ENCODE measurements at regions of chr13 and their contacts with region 1.

Region 1: GRCh38 chr13:76886292-76887075 is at the start of gene KCTD12:
- DNase-seq: peak; percentile 64
- H3K4me3 ChIP-seq: peak within 1 kb of the TSS; percentile 62
- H3K27ac ChIP-seq: no peak within 1 kb of the TSS
- H3K4me1 ChIP-seq: no peaks in the 10 kb centered on the region
- CTCF ChIP-seq: peak; percentile 24; the same call in 1 of the 2 replicates
- total RNA-seq, gene KCTD12: not detected in 2 replicates

Region 2: GRCh38 chr13:77697217-77698103 is 811.0 kb after region 1 on chr13 and contains the start of gene SLAIN1:
- CTCF ChIA-PET with region 1: no interaction called
- POLR2A ChIA-PET with region 1: no interaction called
- intact Hi-C with region 1: loop called (anchors 5 kb)
- DNase-seq: peak; percentile 92
- H3K4me3 ChIP-seq: peak within 1 kb of the TSS; percentile 73
- H3K27ac ChIP-seq: peak within 1 kb of the TSS; percentile 24
- H3K4me1 ChIP-seq: peaks cover 29% of the 10 kb centered on the region
- CTCF ChIP-seq: no peak
- total RNA-seq, gene SLAIN1: 28.5 and 31.7 TPM in 2 replicates